PC-3 (cell line): ENCODE measurements at regions of chr9 and their contacts with region 1.

Region 1: GRCh38 chr9:21677834-21678233 is 124.6 kb upstream of the MTAP start:
- DNase-seq: peak; percentile 96
- ATAC-seq: peak; percentile 64
- H3K4me3 ChIP-seq: peak overlapping the region; percentile 52
- H3K27ac ChIP-seq: peak overlapping the region; percentile 99
- H3K4me1 ChIP-seq: peaks cover 76% of the 10 kb centered on the region
- H3K27me3 ChIP-seq: no peaks in the 10 kb centered on the region
- CTCF ChIP-seq: no peak

Region 2: GRCh38 chr9:21559424-21560280 is 118.2 kb before region 1 on chr9:
- CTCF ChIA-PET with region 1: no interaction called
- POLR2A ChIA-PET with region 1: interaction called, 6 read pairs
- intact Hi-C with region 1: loop called (anchors 2 kb)
- DNase-seq: peak; percentile 82
- ATAC-seq: peak; percentile 78
- H3K4me3 ChIP-seq: peak overlapping the region; percentile 96
- H3K27ac ChIP-seq: peak overlapping the region; percentile 99
- H3K4me1 ChIP-seq: peaks cover 32% of the 10 kb centered on the region
- H3K27me3 ChIP-seq: no peaks in the 10 kb centered on the region
- CTCF ChIP-seq: no peak

Region 3: GRCh38 chr9:21605489-21605931 is 72.3 kb before region 1 on chr9:
- CTCF ChIA-PET with region 1: no interaction called
- POLR2A ChIA-PET with region 1: no interaction called
- intact Hi-C with region 1: no loop called
- DNase-seq: peak; percentile 37
- ATAC-seq: no peak
- H3K4me3 ChIP-seq: no peak overlapping the region
- H3K27ac ChIP-seq: peak overlapping the region; percentile 24
- H3K4me1 ChIP-seq: peaks cover 28% of the 10 kb centered on the region
- H3K27me3 ChIP-seq: no peaks in the 10 kb centered on the region
- CTCF ChIP-seq: no peak

Region 4: GRCh38 chr9:21616082-21616778 is 61.6 kb before region 1 on chr9:
- CTCF ChIA-PET with region 1: interaction called, 3 read pairs
- POLR2A ChIA-PET with region 1: no interaction called
- intact Hi-C with region 1: loop called (anchors 5 kb)
- DNase-seq: peak; percentile 83
- ATAC-seq: peak; percentile 87
- H3K4me3 ChIP-seq: peak overlapping the region; percentile 35; the same call in 1 of the 2 replicates
- H3K27ac ChIP-seq: peak overlapping the region; percentile 90
- H3K4me1 ChIP-seq: peaks cover 47% of the 10 kb centered on the region
- H3K27me3 ChIP-seq: no peaks in the 10 kb centered on the region
- CTCF ChIP-seq: no peak

Region 5: GRCh38 chr9:21656776-21657674 is 20.8 kb before region 1 on chr9:
- CTCF ChIA-PET with region 1: no interaction called
- POLR2A ChIA-PET with region 1: no interaction called
- intact Hi-C with region 1: loop called (anchors 2 kb)
- DNase-seq: peak; percentile 94
- ATAC-seq: peak; percentile 84
- H3K4me3 ChIP-seq: peak overlapping the region; percentile 26
- H3K27ac ChIP-seq: peak overlapping the region; percentile 92
- H3K4me1 ChIP-seq: peaks cover 37% of the 10 kb centered on the region
- H3K27me3 ChIP-seq: no peaks in the 10 kb centered on the region
- CTCF ChIP-seq: no peak